Heart left ventricle (tissue), 16 donors: ENCODE measurements at regions of chr5 and their contacts with region 1.

Region 1: DNA sequence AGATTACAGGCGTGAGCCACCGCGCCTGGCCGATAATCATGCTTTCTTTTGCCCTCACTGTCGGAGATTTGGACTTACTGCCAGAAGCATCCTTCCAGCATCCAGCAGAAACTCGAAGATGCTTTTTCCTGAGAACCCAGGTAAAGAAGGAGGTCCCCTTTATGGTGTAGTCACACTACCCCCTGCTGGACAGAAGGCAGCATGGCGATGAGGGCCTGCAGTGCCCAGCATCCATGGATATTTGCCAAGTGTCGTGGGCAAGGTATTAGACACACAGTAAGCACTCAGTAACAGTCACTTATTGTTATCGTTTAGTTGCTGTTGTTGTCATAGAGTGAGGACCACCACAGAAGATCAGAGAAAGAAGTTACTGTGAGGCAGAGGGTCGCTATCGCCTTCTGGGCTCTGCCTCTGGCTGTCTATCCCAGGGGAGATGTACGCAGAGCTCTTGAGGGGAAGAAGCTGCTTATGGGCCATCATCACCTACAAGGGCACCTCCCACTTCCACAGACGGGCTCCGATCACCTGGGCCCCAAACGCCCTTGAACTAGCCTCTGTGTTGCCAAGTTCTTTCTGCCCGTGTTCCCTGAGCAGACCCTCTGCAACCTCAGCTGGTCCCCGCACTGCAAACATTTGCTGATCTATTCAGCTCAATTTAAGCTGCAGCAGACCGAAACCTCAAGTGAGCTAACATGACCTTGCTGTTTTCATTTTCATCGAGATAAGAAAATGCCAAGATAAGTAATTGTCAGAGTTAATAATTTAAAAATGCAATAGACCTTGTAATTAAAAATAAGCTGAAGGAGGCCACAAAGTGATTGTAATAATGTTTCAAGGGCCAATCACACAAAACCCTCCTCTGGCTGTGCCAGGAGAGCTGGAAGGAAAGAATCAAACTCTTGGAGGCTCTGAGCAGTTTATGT is 23.9 kb downstream of the C5orf15 start:
- DNase-seq: peak in 2 of 5 donors; percentile 35 to 41
- ATAC-seq: peak in 3 of 4 donors; percentile 61 to 70 (median 67)
- H3K4me3 ChIP-seq: no peak overlapping the region
- H3K27ac ChIP-seq: no peak overlapping the region
- H3K4me1 ChIP-seq: peaks cover 0 to 8% (median 0%) of the 10 kb centered on the region in 12 donors
- H3K27me3 ChIP-seq: no peaks in the 10 kb centered on the region
- CTCF ChIP-seq: peak; percentile 36 to 66 (median 52)
- POLR2A ChIP-seq: no peak

Region 2: GRCh38 chr5:133754575-133755169 is 189.9 kb before region 1 on chr5:
- intact Hi-C with region 1: loop called in 3 of 10 experiments (anchors 10 kb)
- DNase-seq: peak in 1 of 5 donors; percentile 13
- ATAC-seq: peak in 3 of 4 donors; percentile 60 to 69 (median 62)
- H3K4me3 ChIP-seq: no peak overlapping the region
- H3K27ac ChIP-seq: no peak overlapping the region
- H3K4me1 ChIP-seq: no peaks in the 10 kb centered on the region
- H3K27me3 ChIP-seq: peaks cover 0 to 30% (median 6%) of the 10 kb centered on the region in 9 donors
- CTCF ChIP-seq: peak; percentile 30 to 64 (median 49)
- POLR2A ChIP-seq: no peak

Region 3: GRCh38 chr5:133779828-133780475 is 164.6 kb before region 1 on chr5:
- intact Hi-C with region 1: loop called in 1 of 10 experiments (anchors 10 kb)
- DNase-seq: no peak
- ATAC-seq: peak; percentile 30 to 52 (median 37)
- H3K4me3 ChIP-seq: no peak overlapping the region
- H3K27ac ChIP-seq: peak overlapping the region in 4 of 12 donors; percentile 13 to 57 (median 34)
- H3K4me1 ChIP-seq: peaks cover 0 to 4% (median 0%) of the 10 kb centered on the region in 12 donors
- H3K27me3 ChIP-seq: no peaks in the 10 kb centered on the region
- CTCF ChIP-seq: no peak
- POLR2A ChIP-seq: no peak

Region 4: GRCh38 chr5:134004592-134005375 is 60.3 kb after region 1 on chr5 and contains the start of gene VDAC1:
- intact Hi-C with region 1: no loop called
- DNase-seq: peak; percentile 84 to 91 (median 88)
- ATAC-seq: peak; percentile 71 to 90 (median 86)
- H3K4me3 ChIP-seq: peak within 1 kb of the TSS; percentile 61 to 99 (median 90)
- H3K27ac ChIP-seq: peak within 1 kb of the TSS; percentile 94 to 100 (median 100)
- H3K4me1 ChIP-seq: peaks cover 7 to 53% (median 48%) of the 10 kb centered on the region in 12 donors
- H3K27me3 ChIP-seq: no peaks in the 10 kb centered on the region
- CTCF ChIP-seq: peak in 1 of 12 donors; percentile 24
- POLR2A ChIP-seq: peak in 1 of 2 donors; percentile 77
- total RNA-seq, gene VDAC1: 379 to 596 (median 548) TPM

Region 5: DNA sequence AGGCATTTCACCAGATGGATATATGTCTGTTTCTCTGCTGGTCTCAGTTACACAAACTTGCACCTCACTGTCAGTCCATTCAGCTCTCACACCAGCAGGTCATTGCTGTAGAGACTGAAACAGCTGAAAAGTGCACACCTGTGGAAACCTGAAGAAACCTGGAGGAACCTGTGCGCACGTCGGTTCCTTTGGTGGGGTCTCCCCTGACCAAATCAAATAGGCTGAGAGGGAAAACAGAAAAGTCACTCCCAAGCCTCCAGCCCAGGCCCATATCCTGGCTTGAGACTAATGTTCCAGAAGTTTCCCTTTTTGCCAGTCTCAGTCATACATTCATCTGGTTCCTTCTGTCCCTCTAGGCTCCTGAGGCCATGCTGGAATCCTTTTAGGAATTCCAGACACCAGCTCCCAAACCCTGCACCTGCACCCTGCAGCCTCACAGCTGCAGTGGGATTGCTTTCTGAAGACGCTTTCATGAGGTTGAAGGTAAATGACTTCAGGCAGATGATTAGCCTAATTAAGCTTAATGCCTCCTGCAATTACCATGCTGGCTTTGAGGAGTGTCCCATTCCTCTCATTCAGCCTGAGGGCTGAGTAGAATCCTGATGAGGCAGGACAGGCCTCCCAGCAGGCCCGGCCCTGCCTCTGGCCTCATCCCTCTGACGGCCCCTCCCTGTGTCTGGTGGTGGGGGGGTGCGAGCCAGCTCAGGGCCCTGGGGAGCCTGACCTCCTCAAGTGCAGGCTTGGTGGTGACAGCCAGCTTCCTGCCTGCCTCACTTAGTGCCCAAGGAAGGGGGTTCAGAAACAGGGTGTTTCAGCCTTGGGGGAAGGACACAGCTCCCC is 1658.6 kb after region 1 on chr5:
- intact Hi-C with region 1: no loop called
- DNase-seq: no peak
- ATAC-seq: no peak
- H3K4me3 ChIP-seq: no peak overlapping the region
- H3K27ac ChIP-seq: no peak overlapping the region
- H3K4me1 ChIP-seq: no peaks in the 10 kb centered on the region
- H3K27me3 ChIP-seq: peaks cover 0 to 3% (median 0%) of the 10 kb centered on the region in 9 donors
- CTCF ChIP-seq: no peak
- POLR2A ChIP-seq: no peak